ENCODE measurements at regions of chr9 and their contacts with region 1.

Region 1: GRCh38 chr9:36023260-36024048 is 13.3 kb upstream of the RECK start:
- DNase-seq: peak; percentile 36 to 60 (median 55)
- H3K4me3 ChIP-seq: no peak overlapping the region
- H3K27ac ChIP-seq: no peak overlapping the region
- H3K4me1 ChIP-seq: no peaks in the 10 kb centered on the region
- H3K27me3 ChIP-seq: no peaks in the 10 kb centered on the region
- CTCF ChIP-seq: peak; percentile 42 to 51 (median 42)
- EP300 ChIP-seq: no peak
- POLR2A ChIP-seq: no peak

Region 2: DNA sequence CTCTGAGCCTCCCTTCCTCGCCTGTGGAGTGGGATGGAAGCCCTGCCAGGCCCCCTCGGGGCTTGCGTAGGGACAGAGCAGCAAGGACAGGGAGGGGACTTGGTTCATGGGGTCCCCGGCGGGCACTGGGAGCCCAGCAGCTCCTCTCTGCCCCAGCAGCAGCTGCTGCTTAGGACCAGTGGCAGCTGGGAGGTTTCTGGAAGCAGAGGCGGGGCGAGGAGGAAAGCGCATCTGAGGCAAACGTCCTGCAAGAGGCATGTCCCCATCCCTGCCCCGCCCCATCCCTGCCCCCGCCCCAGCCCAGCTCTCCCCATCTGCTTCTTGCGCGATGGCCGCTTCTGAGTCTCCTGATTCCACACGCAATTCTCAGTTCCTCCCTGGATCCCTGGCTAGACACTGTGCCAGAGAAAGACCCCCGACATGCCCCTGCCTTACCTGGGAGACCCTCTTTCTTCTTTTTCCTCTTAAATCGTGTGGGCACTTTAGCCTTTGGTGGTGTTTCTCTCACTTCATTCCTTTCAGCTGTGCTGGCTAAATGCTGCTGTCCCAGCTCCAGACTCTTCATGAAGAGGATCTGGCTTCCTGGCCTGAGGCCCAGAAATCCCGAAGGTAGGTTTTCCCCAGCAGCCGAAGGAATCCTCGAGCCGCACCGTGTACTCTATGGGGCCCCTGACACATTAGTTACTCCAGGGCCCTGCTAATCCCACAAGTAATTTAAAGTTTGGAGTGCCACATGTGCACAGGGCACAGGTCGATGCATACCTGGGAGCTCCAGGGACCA is 61.1 kb before region 1 on chr9:
- intact Hi-C with region 1: loop called in 1 of 4 experiments (anchors 10 kb)
- DNase-seq: no peak
- H3K4me3 ChIP-seq: no peak overlapping the region
- H3K27ac ChIP-seq: no peak overlapping the region
- H3K4me1 ChIP-seq: no peaks in the 10 kb centered on the region
- H3K27me3 ChIP-seq: no peaks in the 10 kb centered on the region
- CTCF ChIP-seq: no peak
- EP300 ChIP-seq: no peak
- POLR2A ChIP-seq: no peak

Region 3: GRCh38 chr9:36064448-36065037 is 41.1 kb after region 1 on chr9:
- intact Hi-C with region 1: no loop called
- DNase-seq: no peak
- H3K4me3 ChIP-seq: no peak overlapping the region
- H3K27ac ChIP-seq: no peak overlapping the region
- H3K4me1 ChIP-seq: no peaks in the 10 kb centered on the region
- H3K27me3 ChIP-seq: no peaks in the 10 kb centered on the region
- CTCF ChIP-seq: no peak
- EP300 ChIP-seq: no peak
- POLR2A ChIP-seq: no peak